Activated CD4-positive, alpha-beta memory T cell treated with anti-CD3 and anti-CD28 coated beads, Interleukin-2, amount 10 ng/mL, durations not matched to agents 7 days and 5 days (primary cell): ENCODE measurements at regions of chr6 and their contacts with region 1.

Region 1: DNA sequence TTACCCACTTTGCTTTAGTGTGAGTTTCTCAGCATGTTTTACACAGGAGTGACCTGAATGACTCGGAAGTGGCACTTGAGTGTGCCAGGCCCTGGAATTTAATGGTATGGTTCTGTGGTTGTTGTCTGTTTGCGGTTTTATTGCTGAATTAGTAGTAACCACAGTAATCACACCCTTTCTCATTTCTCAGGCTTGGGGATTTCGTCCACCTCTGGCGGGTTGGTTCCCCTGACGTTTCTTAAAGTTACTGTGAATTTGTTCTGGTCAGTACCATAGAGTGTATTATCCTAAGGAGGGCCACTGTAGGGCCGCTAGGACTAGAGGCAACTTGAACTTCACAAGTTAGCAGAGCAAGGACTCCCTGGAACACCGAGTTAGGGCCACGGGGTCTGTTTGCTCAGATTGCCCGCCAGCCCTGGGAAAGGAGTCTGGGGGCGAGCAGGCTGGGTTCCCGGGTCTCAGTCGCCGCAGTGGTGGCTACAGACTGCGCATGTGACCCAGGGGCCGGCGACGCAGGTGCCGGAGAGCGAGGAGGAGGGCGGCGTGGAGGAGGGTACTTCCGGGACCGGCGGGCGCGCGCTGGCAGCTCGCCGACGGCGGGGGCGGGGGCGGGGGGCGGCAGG is 546 bp upstream of the KLHL32 start:
- DNase-seq: no peak
- H3K4me3 Mint-ChIP-seq: peak overlapping the region; percentile 90
- H3K27ac Mint-ChIP-seq: peak overlapping the region; percentile 77
- H3K4me1 Mint-ChIP-seq: peaks cover 34% of the 10 kb centered on the region
- H3K27me3 Mint-ChIP-seq: peaks cover 2% of the 10 kb centered on the region

Region 2: GRCh38 chr6:96837081-96837971 is 86.7 kb before region 1 on chr6 and contains the start of gene GPR63:
- CTCF ChIA-PET with region 1: no interaction called
- POLR2A ChIA-PET with region 1: interaction called, 10 read pairs
- DNase-seq: peak; percentile 89
- H3K4me3 Mint-ChIP-seq: peak within 1 kb of the TSS; percentile 94
- H3K27ac Mint-ChIP-seq: peak within 1 kb of the TSS; percentile 79
- H3K4me1 Mint-ChIP-seq: peaks cover 32% of the 10 kb centered on the region
- H3K27me3 Mint-ChIP-seq: peaks cover 19% of the 10 kb centered on the region
- total RNA-seq, gene GPR63: 3.5 to 3.7 TPM

Region 3: DNA sequence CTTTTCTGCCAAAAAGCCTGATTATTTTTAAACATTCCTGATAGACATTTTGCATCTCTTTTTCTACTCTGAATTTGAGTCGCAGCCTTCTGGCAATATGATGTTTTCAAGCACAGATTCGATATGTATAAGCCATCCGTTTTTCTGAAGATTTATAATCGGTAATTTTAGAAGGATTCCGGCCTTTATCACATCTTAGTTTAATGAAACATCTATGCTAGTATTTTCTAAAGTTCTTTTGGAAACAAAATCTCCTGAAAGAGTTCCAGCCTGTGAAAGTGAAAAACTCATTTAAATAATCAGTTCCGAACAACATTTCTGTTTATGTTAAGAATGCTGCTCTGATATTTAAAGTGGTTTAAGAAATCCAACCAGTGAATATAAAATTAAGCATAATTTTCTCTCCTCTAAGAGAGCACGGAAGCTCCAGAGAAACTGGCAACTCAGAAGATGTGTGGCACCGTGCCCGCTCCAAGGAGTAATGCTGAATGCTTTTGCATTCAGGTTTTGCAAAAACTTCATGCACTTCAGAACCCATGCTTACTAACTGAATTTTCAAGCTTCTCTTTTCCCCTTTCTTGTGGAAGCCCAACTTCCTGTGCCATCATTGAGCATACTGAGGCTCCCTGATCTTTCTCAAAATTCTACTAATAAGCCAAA is 47.0 kb before region 1 on chr6:
- CTCF ChIA-PET with region 1: no interaction called
- POLR2A ChIA-PET with region 1: no interaction called
- DNase-seq: no peak
- H3K4me3 Mint-ChIP-seq: no peak overlapping the region
- H3K27ac Mint-ChIP-seq: no peak overlapping the region
- H3K4me1 Mint-ChIP-seq: no peaks in the 10 kb centered on the region
- H3K27me3 Mint-ChIP-seq: peaks cover 3% of the 10 kb centered on the region

Region 4: GRCh38 chr6:96897383-96898240 is 26.4 kb before region 1 on chr6 and contains the start of gene NDUFAF4:
- CTCF ChIA-PET with region 1: interaction called, 20 read pairs
- POLR2A ChIA-PET with region 1: interaction called, 5 read pairs
- DNase-seq: peak; percentile 95
- H3K4me3 Mint-ChIP-seq: peak within 1 kb of the TSS; percentile 95
- H3K27ac Mint-ChIP-seq: peak within 1 kb of the TSS; percentile 93
- H3K4me1 Mint-ChIP-seq: peaks cover 31% of the 10 kb centered on the region
- H3K27me3 Mint-ChIP-seq: peaks cover 4% of the 10 kb centered on the region
- total RNA-seq, gene NDUFAF4: 23.3 to 26.1 TPM

Region 5: GRCh38 chr6:96907498-96907897 is 16.5 kb before region 1 on chr6:
- CTCF ChIA-PET with region 1: interaction called, 12 read pairs
- POLR2A ChIA-PET with region 1: interaction called, 7 read pairs
- DNase-seq: peak; percentile 38
- H3K4me3 Mint-ChIP-seq: no peak overlapping the region
- H3K27ac Mint-ChIP-seq: peak overlapping the region; percentile 18
- H3K4me1 Mint-ChIP-seq: peaks cover 24% of the 10 kb centered on the region
- H3K27me3 Mint-ChIP-seq: peaks cover 10% of the 10 kb centered on the region

Region 6: DNA sequence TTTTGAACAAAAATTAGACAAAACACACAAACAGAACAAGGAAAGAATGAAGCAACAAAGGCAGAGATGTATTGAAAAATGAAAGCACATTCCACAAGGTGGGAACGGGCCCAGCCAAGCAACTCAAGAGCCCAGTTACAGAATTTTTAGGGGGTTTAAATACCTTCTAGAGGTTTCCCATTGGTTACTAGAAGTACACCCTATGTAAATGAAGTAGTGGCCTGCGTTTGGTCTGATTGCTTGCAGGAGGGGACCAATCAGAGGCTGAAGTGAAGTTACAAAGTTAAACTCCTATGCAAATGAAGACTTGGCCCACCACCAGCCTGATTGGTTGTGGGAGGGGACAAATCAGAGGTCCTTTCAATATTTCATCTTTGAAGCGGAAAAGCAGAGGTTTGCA is 952.7 kb after region 1 on chr6:
- CTCF ChIA-PET with region 1: no interaction called
- POLR2A ChIA-PET with region 1: no interaction called
- DNase-seq: no peak
- H3K4me3 Mint-ChIP-seq: no peak overlapping the region
- H3K27ac Mint-ChIP-seq: no peak overlapping the region
- H3K4me1 Mint-ChIP-seq: no peaks in the 10 kb centered on the region
- H3K27me3 Mint-ChIP-seq: no peaks in the 10 kb centered on the region